CD8-positive, alpha-beta T cell (primary cell): ENCODE measurements at regions of chr1 and their contacts with region 1.

Region 1: DNA sequence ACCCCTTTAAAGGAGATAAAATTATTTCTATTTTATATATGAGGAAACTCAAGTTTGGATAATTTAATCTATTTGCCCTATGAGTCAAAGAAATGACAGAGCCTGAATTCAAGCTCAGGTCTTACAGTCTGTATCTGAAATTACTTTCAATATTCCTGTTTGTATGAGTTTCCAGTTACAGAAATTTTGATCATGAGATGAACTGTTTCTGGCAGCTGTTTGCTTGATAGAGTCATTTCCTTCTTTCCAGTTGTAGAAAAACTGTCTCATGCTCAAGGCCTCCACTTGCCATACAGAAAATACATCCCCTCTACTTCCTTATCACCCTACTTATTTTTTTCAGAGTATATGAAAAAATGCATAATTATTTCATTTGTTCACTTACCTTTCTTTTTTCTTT is 87.6 kb downstream of the PTPRC start:
- DNase-seq: no peak
- ATAC-seq: no peak
- H3K4me3 ChIP-seq: no peak overlapping the region
- H3K4me3 Mint-ChIP-seq: no peak overlapping the region
- H3K27ac ChIP-seq: no peak overlapping the region
- H3K27ac Mint-ChIP-seq: peak overlapping the region; percentile 82
- H3K4me1 ChIP-seq: peaks cover 43% of the 10 kb centered on the region
- H3K4me1 Mint-ChIP-seq: peaks cover 75% of the 10 kb centered on the region
- H3K27me3 ChIP-seq: no peaks in the 10 kb centered on the region
- H3K27me3 Mint-ChIP-seq: no peaks in the 10 kb centered on the region
- CTCF ChIP-seq: no peak

Region 2: DNA sequence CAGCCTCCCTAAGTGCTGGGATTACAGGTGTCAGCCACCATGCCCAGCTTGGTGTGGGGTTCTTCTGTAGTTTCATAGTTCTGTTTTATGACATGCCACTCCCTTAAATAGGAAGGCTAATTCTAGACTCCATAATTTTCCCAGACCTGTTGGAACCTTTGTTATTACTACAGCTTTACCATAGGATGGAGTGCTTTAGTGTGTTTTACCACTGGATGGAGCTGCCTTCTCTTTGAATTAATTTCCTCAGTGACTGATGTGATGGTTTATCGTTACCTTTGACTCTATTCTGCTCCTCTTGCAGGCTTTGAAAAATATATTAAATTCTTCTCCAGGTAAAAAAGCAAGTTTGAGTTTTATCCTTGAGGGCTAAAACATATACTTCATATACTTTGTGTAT is 654.3 kb before region 1 on chr1:
- CTCF ChIA-PET with region 1: no interaction called
- POLR2A ChIA-PET with region 1: no interaction called
- intact Hi-C with region 1: no loop called
- DNase-seq: no peak
- ATAC-seq: no peak
- H3K4me3 ChIP-seq: no peak overlapping the region
- H3K4me3 Mint-ChIP-seq: no peak overlapping the region
- H3K27ac ChIP-seq: no peak overlapping the region
- H3K27ac Mint-ChIP-seq: no peak overlapping the region
- H3K4me1 ChIP-seq: no peaks in the 10 kb centered on the region
- H3K4me1 Mint-ChIP-seq: no peaks in the 10 kb centered on the region
- H3K27me3 ChIP-seq: peaks cover 0 to 4% of the 10 kb centered on the region in 2 experiments
- H3K27me3 Mint-ChIP-seq: peaks cover 8% of the 10 kb centered on the region
- CTCF ChIP-seq: no peak

Region 3: GRCh38 chr1:198575798-198576641 is 150.4 kb before region 1 on chr1:
- CTCF ChIA-PET with region 1: no interaction called
- POLR2A ChIA-PET with region 1: no interaction called
- intact Hi-C with region 1: no loop called
- DNase-seq: no peak
- ATAC-seq: no peak
- H3K4me3 ChIP-seq: no peak overlapping the region
- H3K4me3 Mint-ChIP-seq: no peak overlapping the region
- H3K27ac ChIP-seq: no peak overlapping the region
- H3K27ac Mint-ChIP-seq: no peak overlapping the region
- H3K4me1 ChIP-seq: no peaks in the 10 kb centered on the region
- H3K4me1 Mint-ChIP-seq: peaks cover 25% of the 10 kb centered on the region
- H3K27me3 ChIP-seq: no peaks in the 10 kb centered on the region
- H3K27me3 Mint-ChIP-seq: no peaks in the 10 kb centered on the region
- CTCF ChIP-seq: no peak

Region 4: DNA sequence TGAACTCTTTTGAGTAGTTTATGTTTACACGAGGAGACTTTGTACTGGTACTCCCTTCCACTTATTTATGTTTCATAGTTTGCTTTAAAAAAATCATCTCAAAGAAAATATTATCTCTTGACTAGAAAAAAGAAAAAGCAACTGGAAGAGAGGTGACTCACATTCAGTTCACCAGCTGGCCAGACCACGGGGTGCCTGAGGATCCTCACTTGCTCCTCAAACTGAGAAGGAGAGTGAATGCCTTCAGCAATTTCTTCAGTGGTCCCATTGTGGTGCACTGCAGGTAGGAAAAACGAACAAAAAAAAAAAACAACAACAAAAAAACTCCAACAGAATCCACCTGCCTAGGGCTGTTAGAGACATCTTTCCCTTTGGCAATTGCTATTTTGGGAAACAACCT is 15.3 kb after region 1 on chr1:
- CTCF ChIA-PET with region 1: no interaction called
- POLR2A ChIA-PET with region 1: interaction called, 3 read pairs
- intact Hi-C with region 1: loop called in 1 of 2 experiments (anchors 2 kb)
- DNase-seq: peak in 1 of 9 experiments; percentile 5
- ATAC-seq: no peak
- H3K4me3 ChIP-seq: no peak overlapping the region
- H3K4me3 Mint-ChIP-seq: no peak overlapping the region
- H3K27ac ChIP-seq: no peak overlapping the region
- H3K27ac Mint-ChIP-seq: peak overlapping the region; percentile 63
- H3K4me1 ChIP-seq: peaks cover 38% of the 10 kb centered on the region
- H3K4me1 Mint-ChIP-seq: peaks cover 47% of the 10 kb centered on the region
- H3K27me3 ChIP-seq: no peaks in the 10 kb centered on the region
- H3K27me3 Mint-ChIP-seq: no peaks in the 10 kb centered on the region
- CTCF ChIP-seq: no peak

Region 5: DNA sequence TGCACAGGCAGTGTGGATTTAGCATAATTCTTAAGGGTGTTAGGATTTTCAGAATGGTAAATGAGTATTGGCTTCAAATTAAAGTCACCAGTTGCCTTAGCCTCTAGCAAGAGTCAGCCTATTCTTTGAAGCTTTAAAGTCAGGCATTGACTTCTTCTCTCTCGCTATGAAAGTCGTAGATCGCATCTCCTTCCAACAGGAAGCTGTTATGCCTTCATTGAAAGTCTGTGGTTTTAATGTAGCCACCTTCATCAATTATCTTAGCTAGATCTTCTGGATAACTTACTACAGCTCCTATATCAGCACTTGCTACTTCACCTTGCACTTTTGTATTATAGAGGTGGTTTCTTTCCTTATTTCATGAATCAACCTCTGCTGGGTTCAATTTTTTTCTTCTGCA is 232.6 kb after region 1 on chr1:
- CTCF ChIA-PET with region 1: no interaction called
- POLR2A ChIA-PET with region 1: no interaction called
- intact Hi-C with region 1: no loop called
- DNase-seq: peak in 1 of 9 experiments; percentile 13
- ATAC-seq: peak; percentile 48
- H3K4me3 ChIP-seq: no peak overlapping the region
- H3K4me3 Mint-ChIP-seq: no peak overlapping the region
- H3K27ac ChIP-seq: no peak overlapping the region
- H3K27ac Mint-ChIP-seq: peak overlapping the region; percentile 8
- H3K4me1 ChIP-seq: peaks cover 29% of the 10 kb centered on the region
- H3K4me1 Mint-ChIP-seq: peaks cover 29% of the 10 kb centered on the region
- H3K27me3 ChIP-seq: no peaks in the 10 kb centered on the region
- H3K27me3 Mint-ChIP-seq: no peaks in the 10 kb centered on the region
- CTCF ChIP-seq: no peak

Region 6: GRCh38 chr1:199573047-199573446 is 846.6 kb after region 1 on chr1:
- CTCF ChIA-PET with region 1: no interaction called
- POLR2A ChIA-PET with region 1: no interaction called
- intact Hi-C with region 1: no loop called
- DNase-seq: no peak
- ATAC-seq: no peak
- H3K4me3 ChIP-seq: no peak overlapping the region
- H3K4me3 Mint-ChIP-seq: no peak overlapping the region
- H3K27ac ChIP-seq: no peak overlapping the region
- H3K27ac Mint-ChIP-seq: no peak overlapping the region
- H3K4me1 ChIP-seq: no peaks in the 10 kb centered on the region
- H3K4me1 Mint-ChIP-seq: no peaks in the 10 kb centered on the region
- H3K27me3 ChIP-seq: no peaks in the 10 kb centered on the region
- H3K27me3 Mint-ChIP-seq: peaks cover 3% of the 10 kb centered on the region
- CTCF ChIP-seq: no peak